ENCODE measurements at regions of chr6 and their contacts with region 1.

Region 1: GRCh38 chr6:70369332-70369950 is 43.9 kb upstream of the FAM135A start:
- DNase-seq: peak; percentile 48 to 79 (median 67)
- ATAC-seq: peak; percentile 67 to 70
- H3K4me3 ChIP-seq: no peak overlapping the region
- H3K27ac ChIP-seq: no peak overlapping the region
- H3K4me1 ChIP-seq: no peaks in the 10 kb centered on the region
- H3K27me3 ChIP-seq: no peaks in the 10 kb centered on the region

Region 2: GRCh38 chr6:70221025-70221714 is 148.3 kb before region 1 on chr6:
- intact Hi-C with region 1: loop called in 1 of 4 experiments (anchors 10 kb)
- DNase-seq: peak in 1 of 3 donors; percentile 17
- ATAC-seq: peak; percentile 51 to 58
- H3K4me3 ChIP-seq: no peak overlapping the region
- H3K27ac ChIP-seq: no peak overlapping the region
- H3K4me1 ChIP-seq: no peaks in the 10 kb centered on the region
- H3K27me3 ChIP-seq: no peaks in the 10 kb centered on the region

Region 3: GRCh38 chr6:70282312-70282918 is 87.0 kb before region 1 on chr6:
- intact Hi-C with region 1: no loop called
- DNase-seq: peak; percentile 37 to 83 (median 81)
- ATAC-seq: peak; percentile 74 to 83
- H3K4me3 ChIP-seq: peak overlapping the region; percentile 34
- H3K27ac ChIP-seq: no peak overlapping the region
- H3K4me1 ChIP-seq: no peaks in the 10 kb centered on the region
- H3K27me3 ChIP-seq: no peaks in the 10 kb centered on the region

Region 4: GRCh38 chr6:70304616-70305015 is 64.8 kb before region 1 on chr6:
- intact Hi-C with region 1: loop called in 1 of 4 experiments (anchors 5 kb)
- DNase-seq: no peak
- ATAC-seq: no peak
- H3K4me3 ChIP-seq: no peak overlapping the region
- H3K27ac ChIP-seq: no peak overlapping the region
- H3K4me1 ChIP-seq: no peaks in the 10 kb centered on the region
- H3K27me3 ChIP-seq: no peaks in the 10 kb centered on the region

Region 5: DNA sequence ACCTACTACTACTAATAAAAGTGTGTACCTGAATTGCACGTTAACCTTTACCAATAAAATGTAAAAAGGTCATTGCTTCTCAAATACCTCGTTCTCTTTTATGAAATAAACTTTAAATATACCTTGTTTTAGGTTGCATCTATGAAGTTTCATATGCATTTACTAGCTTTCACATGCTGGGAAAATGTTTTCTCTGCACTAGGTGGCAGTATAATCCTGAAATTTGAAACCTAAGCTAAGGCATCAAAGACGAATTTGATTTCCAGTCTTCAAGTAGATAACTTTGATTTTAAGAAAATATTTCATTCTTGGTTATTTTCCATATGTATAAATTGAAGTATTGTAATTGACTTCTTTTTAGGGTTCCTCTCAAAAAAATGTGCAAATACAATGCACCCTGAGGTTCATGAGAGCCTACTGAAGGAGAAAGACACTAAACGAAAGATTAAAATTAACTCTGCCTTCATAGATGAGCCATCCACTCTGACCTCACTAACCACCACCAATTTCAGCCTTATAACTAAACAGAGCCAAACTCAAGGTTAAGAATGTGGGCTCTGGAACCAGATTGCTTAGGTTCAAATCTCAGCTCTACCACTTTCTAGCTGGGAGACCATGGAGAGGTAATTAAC is 59.3 kb before region 1 on chr6:
- intact Hi-C with region 1: loop called (anchors 5 to 10 kb)
- DNase-seq: no peak
- ATAC-seq: no peak
- H3K4me3 ChIP-seq: no peak overlapping the region
- H3K27ac ChIP-seq: no peak overlapping the region
- H3K4me1 ChIP-seq: no peaks in the 10 kb centered on the region
- H3K27me3 ChIP-seq: no peaks in the 10 kb centered on the region

Region 6: DNA sequence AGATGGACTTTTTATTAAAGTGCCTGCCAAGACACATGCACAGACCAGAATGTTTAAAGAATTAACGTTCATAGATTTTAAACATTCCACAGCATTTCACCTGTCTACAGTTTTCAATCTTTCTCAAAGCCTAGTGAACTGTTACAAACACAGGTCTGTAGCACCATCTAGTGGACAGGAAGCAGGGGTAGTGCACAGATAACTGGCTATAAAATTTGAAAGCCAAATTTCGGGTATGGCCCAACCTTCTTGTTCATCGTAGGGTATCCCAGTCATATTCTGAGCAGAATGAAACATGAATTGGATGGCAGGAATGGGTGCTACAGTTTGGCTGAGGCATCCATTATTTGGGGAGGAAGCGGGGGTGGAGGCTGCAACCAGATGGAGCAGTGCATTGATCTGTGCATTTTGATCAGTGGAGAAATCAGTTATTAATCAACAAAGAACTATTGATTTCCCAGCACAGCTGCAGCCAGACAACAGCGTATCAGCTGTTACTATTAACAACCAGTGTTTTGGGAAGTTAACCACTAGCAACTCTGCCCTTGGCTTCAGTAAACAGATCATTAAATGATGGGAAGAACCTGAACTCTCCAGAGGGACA is 643.5 kb after region 1 on chr6:
- intact Hi-C with region 1: loop called in 3 of 4 experiments (anchors 5 to 10 kb)
- DNase-seq: no peak
- ATAC-seq: peak; percentile 56 to 73
- H3K4me3 ChIP-seq: no peak overlapping the region
- H3K27ac ChIP-seq: no peak overlapping the region
- H3K4me1 ChIP-seq: no peaks in the 10 kb centered on the region
- H3K27me3 ChIP-seq: no peaks in the 10 kb centered on the region

Measured in right cardiac atrium (tissue), 5 donors.